Natural killer cell (primary cell): ENCODE measurements at regions of chrX and their contacts with region 1.

Region 1: DNA sequence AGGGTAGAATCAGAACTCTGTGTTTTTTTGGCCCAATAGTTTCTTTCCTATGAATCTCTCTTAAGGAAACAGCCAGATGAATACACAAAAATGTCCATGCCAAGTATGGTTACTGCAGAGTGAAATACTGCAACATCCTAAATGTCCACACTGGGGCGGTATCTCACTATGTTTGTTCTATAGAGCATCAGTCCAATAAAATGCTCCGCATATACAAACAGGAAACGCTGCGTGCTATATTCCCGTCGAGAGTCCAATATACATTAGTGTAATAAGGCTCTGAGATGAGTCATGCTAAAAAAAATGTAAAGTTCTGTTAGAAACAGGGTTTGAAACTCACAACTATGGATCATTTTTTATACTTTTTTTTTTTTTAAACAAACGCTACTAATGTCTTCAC is 72.9 kb upstream of the ENOX2 start:
- DNase-seq: peak in 1 of 2 donors; percentile 49
- ATAC-seq: peak in 2 of 3 donors; percentile 59 to 79
- H3K4me3 ChIP-seq: no peak overlapping the region
- H3K4me3 Mint-ChIP-seq: no peak overlapping the region
- H3K27ac ChIP-seq: no peak overlapping the region
- H3K27ac Mint-ChIP-seq: no peak overlapping the region
- H3K4me1 ChIP-seq: no peaks in the 10 kb centered on the region
- H3K4me1 Mint-ChIP-seq: no peaks in the 10 kb centered on the region
- H3K27me3 ChIP-seq: no peaks in the 10 kb centered on the region
- H3K27me3 Mint-ChIP-seq: peaks cover 5 to 37% of the 10 kb centered on the region in 2 donors
- CTCF ChIP-seq: peak; percentile 33

Region 2: DNA sequence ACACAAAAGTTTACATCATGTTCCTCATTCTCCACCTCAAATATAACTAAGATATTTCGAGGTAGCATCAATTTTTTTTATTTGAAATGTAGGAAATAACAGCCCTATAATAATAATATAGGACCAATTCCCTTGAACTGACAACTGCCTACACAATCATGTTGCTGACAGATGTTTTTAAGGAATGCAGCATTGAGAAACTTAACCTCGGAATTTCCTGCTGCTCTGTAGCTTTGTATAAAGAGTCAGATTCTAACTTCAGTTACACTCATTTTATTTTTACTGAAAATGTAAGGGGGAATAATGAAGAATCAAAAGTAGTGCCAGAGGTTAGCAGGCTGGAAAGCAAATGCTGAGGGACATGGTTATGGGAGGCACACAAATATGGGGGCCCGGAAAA is 338.4 kb before region 1 on chrX:
- intact Hi-C with region 1: no loop called
- DNase-seq: no peak
- ATAC-seq: no peak
- H3K4me3 ChIP-seq: no peak overlapping the region
- H3K4me3 Mint-ChIP-seq: no peak overlapping the region
- H3K27ac ChIP-seq: no peak overlapping the region
- H3K27ac Mint-ChIP-seq: no peak overlapping the region
- H3K4me1 ChIP-seq: no peaks in the 10 kb centered on the region
- H3K4me1 Mint-ChIP-seq: no peaks in the 10 kb centered on the region
- H3K27me3 ChIP-seq: no peaks in the 10 kb centered on the region
- H3K27me3 Mint-ChIP-seq: no peaks in the 10 kb centered on the region
- CTCF ChIP-seq: no peak

Region 3: GRCh38 chrX:131802835-131803626 is 827.1 kb after region 1 on chrX:
- intact Hi-C with region 1: loop called (anchors 5 kb)
- DNase-seq: peak in 1 of 2 donors; percentile 43
- ATAC-seq: peak in 1 of 3 donors; percentile 88
- H3K4me3 ChIP-seq: no peak overlapping the region
- H3K4me3 Mint-ChIP-seq: peak overlapping the region; percentile 85
- H3K27ac ChIP-seq: no peak overlapping the region
- H3K27ac Mint-ChIP-seq: peak overlapping the region in 1 of 2 donors; percentile 70
- H3K4me1 ChIP-seq: peaks cover 9% of the 10 kb centered on the region
- H3K4me1 Mint-ChIP-seq: peaks cover 0 to 15% of the 10 kb centered on the region in 2 donors
- H3K27me3 ChIP-seq: no peaks in the 10 kb centered on the region
- H3K27me3 Mint-ChIP-seq: no peaks in the 10 kb centered on the region
- CTCF ChIP-seq: no peak